Ovary (tissue), 10 donors: ENCODE measurements at regions of chr11 and their contacts with region 1.

Region 1: DNA sequence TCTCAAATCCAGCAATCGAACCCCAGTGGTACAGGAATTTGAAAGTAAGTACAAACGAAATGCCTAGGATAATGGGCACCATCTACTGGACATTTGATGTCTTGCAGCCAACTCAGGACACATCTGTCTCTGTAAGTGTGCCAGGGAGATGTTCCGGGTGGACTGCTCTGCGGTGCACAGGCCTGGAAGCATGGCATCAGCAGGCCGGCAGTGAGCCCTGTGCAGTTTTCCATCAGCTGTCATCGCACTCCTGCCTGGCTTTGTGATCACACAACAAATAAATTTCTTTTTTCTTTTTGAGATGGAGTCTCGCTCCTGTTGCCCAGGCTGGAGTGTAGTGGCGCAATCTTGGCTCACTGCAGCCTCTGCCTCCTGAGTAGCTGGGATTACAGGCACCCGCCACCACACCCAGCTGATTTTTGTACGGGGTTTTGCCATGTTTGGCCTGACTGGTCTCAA is 71.0 kb downstream of the JAM3 start:
- DNase-seq: peak; percentile 61 to 84 (median 62)
- H3K4me3 ChIP-seq: no peak overlapping the region
- H3K27ac ChIP-seq: peak overlapping the region in 1 of 2 donors; percentile 69
- H3K4me1 ChIP-seq: peaks cover 2% of the 10 kb centered on the region
- H3K27me3 ChIP-seq: no peaks in the 10 kb centered on the region
- CTCF ChIP-seq: peak; percentile 77 to 94 (median 92)
- EP300 ChIP-seq: no peak
- POLR2A ChIP-seq: no peak

Region 2: GRCh38 chr11:133889893-133890292 is 250.0 kb before region 1 on chr11:
- intact Hi-C with region 1: no loop called
- DNase-seq: no peak
- H3K4me3 ChIP-seq: no peak overlapping the region
- H3K27ac ChIP-seq: no peak overlapping the region
- H3K4me1 ChIP-seq: no peaks in the 10 kb centered on the region
- H3K27me3 ChIP-seq: no peaks in the 10 kb centered on the region
- CTCF ChIP-seq: no peak
- EP300 ChIP-seq: no peak
- POLR2A ChIP-seq: no peak

Region 3: GRCh38 chr11:133927690-133928627 is 211.9 kb before region 1 on chr11:
- intact Hi-C with region 1: loop called in 3 of 4 experiments (anchors 10 kb)
- DNase-seq: peak; percentile 52 to 77 (median 65)
- H3K4me3 ChIP-seq: no peak overlapping the region
- H3K27ac ChIP-seq: no peak overlapping the region
- H3K4me1 ChIP-seq: no peaks in the 10 kb centered on the region
- H3K27me3 ChIP-seq: no peaks in the 10 kb centered on the region
- CTCF ChIP-seq: peak; percentile 41 to 78 (median 73)
- EP300 ChIP-seq: no peak
- POLR2A ChIP-seq: no peak

Region 4: DNA sequence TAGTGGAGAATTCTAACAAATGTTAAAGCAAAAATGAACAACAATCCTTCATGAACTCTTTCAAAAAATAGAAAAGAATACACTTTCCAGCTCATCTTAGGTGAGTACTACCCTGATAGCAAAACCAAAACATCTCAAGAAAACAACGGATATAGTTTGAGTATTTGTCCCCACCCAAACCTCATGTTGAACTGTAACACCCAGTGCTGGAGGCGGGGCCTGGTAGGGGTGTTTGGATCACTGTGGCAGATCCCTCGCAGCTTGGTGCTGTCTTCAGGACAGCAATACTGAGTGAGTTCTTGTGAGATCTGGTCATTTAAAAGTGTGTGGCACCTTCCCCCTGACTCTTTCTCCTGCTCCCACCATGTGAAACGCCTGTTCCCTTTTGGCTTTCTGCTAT is 56.9 kb after region 1 on chr11:
- intact Hi-C with region 1: no loop called
- DNase-seq: no peak
- H3K4me3 ChIP-seq: no peak overlapping the region
- H3K27ac ChIP-seq: no peak overlapping the region
- H3K4me1 ChIP-seq: no peaks in the 10 kb centered on the region
- H3K27me3 ChIP-seq: no peaks in the 10 kb centered on the region
- CTCF ChIP-seq: no peak
- EP300 ChIP-seq: no peak
- POLR2A ChIP-seq: no peak

Region 5: DNA sequence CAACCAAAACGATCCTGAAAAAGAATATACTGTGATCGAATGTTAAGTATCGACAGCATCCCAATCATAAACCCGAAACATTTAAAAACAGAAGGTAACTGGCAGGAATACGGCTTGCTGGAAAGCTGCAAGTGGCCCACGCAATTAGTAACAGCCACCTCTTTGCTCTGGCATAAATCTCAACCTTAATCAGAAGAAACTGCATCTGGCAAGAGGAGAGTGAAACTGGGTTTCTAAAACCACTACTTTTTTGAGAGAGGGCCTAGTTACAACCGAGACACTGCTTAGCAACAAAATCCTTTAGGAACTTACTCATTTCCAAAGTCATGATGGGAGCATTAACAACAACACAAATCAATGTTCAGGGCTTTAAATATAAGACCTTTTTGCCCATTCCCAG is 75.9 kb after region 1 on chr11:
- intact Hi-C with region 1: no loop called
- DNase-seq: no peak
- H3K4me3 ChIP-seq: no peak overlapping the region
- H3K27ac ChIP-seq: no peak overlapping the region
- H3K4me1 ChIP-seq: no peaks in the 10 kb centered on the region
- H3K27me3 ChIP-seq: no peaks in the 10 kb centered on the region
- CTCF ChIP-seq: no peak
- EP300 ChIP-seq: no peak
- POLR2A ChIP-seq: no peak